CD8-positive, alpha-beta T cell (primary cell): ENCODE measurements at regions of chr12 and their contacts with region 1.

Region 1: DNA sequence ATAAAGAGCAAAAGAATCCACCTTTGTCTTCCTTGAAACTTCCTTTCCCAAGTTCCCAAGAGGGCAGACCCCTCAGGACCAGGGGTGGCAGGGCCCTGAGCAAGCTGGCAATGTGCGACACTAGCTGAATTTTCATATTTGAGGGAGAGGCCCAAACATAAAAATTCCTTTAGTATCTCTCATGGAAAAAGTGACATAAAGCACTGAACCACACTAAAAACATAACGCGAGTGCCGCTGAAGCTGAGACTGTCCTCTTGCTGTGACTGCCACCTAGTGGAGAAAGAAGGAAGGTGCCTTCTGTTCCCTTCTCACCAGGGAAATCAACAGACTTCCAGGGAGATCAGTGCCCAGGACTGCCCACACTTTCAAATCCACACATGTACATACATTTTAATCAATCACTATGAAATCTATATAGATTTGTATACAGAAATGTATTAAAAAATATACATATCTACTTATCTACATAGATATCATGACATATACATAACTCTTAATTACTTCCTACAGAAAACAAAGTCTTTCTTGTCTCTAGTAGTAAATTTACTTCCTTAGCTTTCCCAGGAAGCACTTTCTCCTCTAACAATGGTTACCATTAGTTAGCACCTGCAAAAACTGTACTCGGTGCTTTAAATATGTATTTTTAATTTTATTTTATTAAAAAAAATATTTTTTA is 53.8 kb downstream of the SSH1 start:
- DNase-seq: peak; percentile 44 to 84 (median 68)
- ATAC-seq: peak; percentile 95
- H3K4me3 ChIP-seq: no peak overlapping the region
- H3K4me3 Mint-ChIP-seq: no peak overlapping the region
- H3K27ac ChIP-seq: no peak overlapping the region
- H3K27ac Mint-ChIP-seq: peak overlapping the region; percentile 14
- H3K4me1 ChIP-seq: no peaks in the 10 kb centered on the region
- H3K4me1 Mint-ChIP-seq: peaks cover 4% of the 10 kb centered on the region
- H3K27me3 ChIP-seq: no peaks in the 10 kb centered on the region
- H3K27me3 Mint-ChIP-seq: no peaks in the 10 kb centered on the region
- CTCF ChIP-seq: peak; percentile 94

Region 2: DNA sequence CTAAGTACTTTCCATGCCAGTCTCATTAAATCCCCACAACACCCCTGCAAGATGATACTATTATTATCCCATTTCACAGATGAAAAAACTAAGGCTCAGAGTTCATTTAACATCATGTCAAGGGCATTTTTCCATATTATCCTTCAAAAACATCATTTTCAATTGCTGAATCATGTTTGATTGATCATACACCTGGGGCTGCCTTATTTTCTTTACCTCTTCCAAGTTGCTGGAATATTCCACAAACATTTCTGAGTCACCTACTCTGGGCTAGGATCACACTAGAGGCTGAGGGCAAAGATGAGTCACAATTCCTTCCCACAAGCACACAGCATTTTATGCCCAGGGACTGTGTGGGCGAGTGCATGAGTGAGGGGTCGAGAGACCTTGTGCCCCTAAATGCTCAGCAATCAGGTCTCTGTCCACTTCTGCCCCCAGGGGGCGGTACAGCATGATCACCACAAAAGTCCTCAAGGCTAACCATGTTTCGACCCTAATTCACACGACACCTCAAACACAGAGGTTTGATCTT is 191.6 kb before region 1 on chr12:
- CTCF ChIA-PET with region 1: interaction called, 43 read pairs
- POLR2A ChIA-PET with region 1: interaction called, 5 read pairs
- intact Hi-C with region 1: loop called (anchors 1 kb)
- DNase-seq: peak in 7 of 9 experiments; percentile 47 to 85 (median 68)
- ATAC-seq: peak; percentile 34
- H3K4me3 ChIP-seq: no peak overlapping the region
- H3K4me3 Mint-ChIP-seq: no peak overlapping the region
- H3K27ac ChIP-seq: no peak overlapping the region
- H3K27ac Mint-ChIP-seq: no peak overlapping the region
- H3K4me1 ChIP-seq: peaks cover 10% of the 10 kb centered on the region
- H3K4me1 Mint-ChIP-seq: peaks cover 22% of the 10 kb centered on the region
- H3K27me3 ChIP-seq: no peaks in the 10 kb centered on the region
- H3K27me3 Mint-ChIP-seq: no peaks in the 10 kb centered on the region
- CTCF ChIP-seq: peak; percentile 38

Region 3: DNA sequence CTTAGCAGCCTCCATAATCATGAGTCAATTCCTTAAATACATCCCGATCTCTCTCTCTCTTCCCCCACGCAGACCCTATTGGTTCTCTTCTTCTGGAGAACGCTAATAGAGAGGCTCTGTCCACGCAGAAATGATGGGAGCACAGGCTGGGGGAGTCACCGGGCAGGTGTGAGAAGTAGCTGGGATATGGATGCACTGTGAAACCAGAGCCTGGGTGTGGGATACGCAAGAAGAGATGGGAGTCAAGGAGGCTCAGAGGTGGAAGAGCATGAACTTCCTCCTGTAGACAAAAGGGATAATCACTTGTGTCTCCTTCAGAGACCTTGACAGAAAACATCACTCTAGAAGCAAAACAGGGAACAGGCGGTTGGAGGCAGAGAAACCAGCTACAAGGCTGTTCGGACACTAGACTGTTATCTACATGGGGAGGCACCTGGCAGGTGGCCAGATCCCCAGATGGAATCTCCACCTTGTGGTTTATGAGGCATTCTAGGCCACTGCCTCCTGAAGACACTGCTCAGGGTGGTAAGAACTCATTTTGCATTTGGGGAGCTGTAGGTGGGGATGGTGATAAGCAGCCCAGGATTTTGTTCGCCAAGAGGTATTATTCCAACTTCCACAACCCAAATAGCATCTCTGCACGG is 162.6 kb before region 1 on chr12:
- CTCF ChIA-PET with region 1: interaction called, 21 read pairs
- POLR2A ChIA-PET with region 1: no interaction called
- intact Hi-C with region 1: no loop called
- DNase-seq: peak in 1 of 9 experiments; percentile 30
- ATAC-seq: no peak
- H3K4me3 ChIP-seq: no peak overlapping the region
- H3K4me3 Mint-ChIP-seq: no peak overlapping the region
- H3K27ac ChIP-seq: no peak overlapping the region
- H3K27ac Mint-ChIP-seq: no peak overlapping the region
- H3K4me1 ChIP-seq: peaks cover 37% of the 10 kb centered on the region
- H3K4me1 Mint-ChIP-seq: peaks cover 48% of the 10 kb centered on the region
- H3K27me3 ChIP-seq: no peaks in the 10 kb centered on the region
- H3K27me3 Mint-ChIP-seq: no peaks in the 10 kb centered on the region
- CTCF ChIP-seq: no peak

Region 4: GRCh38 chr12:108816652-108817335 is 13.2 kb after region 1 on chr12:
- CTCF ChIA-PET with region 1: interaction called, 19 read pairs
- POLR2A ChIA-PET with region 1: no interaction called
- intact Hi-C with region 1: no loop called
- DNase-seq: no peak
- ATAC-seq: no peak
- H3K4me3 ChIP-seq: no peak overlapping the region
- H3K4me3 Mint-ChIP-seq: no peak overlapping the region
- H3K27ac ChIP-seq: no peak overlapping the region
- H3K27ac Mint-ChIP-seq: no peak overlapping the region
- H3K4me1 ChIP-seq: no peaks in the 10 kb centered on the region
- H3K4me1 Mint-ChIP-seq: no peaks in the 10 kb centered on the region
- H3K27me3 ChIP-seq: no peaks in the 10 kb centered on the region
- H3K27me3 Mint-ChIP-seq: no peaks in the 10 kb centered on the region
- CTCF ChIP-seq: no peak

Region 5: GRCh38 chr12:108875682-108876361 is 72.3 kb after region 1 on chr12:
- CTCF ChIA-PET with region 1: no interaction called
- POLR2A ChIA-PET with region 1: no interaction called
- intact Hi-C with region 1: no loop called
- DNase-seq: no peak
- ATAC-seq: no peak
- H3K4me3 ChIP-seq: no peak overlapping the region
- H3K4me3 Mint-ChIP-seq: no peak overlapping the region
- H3K27ac ChIP-seq: no peak overlapping the region
- H3K27ac Mint-ChIP-seq: no peak overlapping the region
- H3K4me1 ChIP-seq: no peaks in the 10 kb centered on the region
- H3K4me1 Mint-ChIP-seq: no peaks in the 10 kb centered on the region
- H3K27me3 ChIP-seq: no peaks in the 10 kb centered on the region
- H3K27me3 Mint-ChIP-seq: peaks cover 2% of the 10 kb centered on the region
- CTCF ChIP-seq: no peak

Region 6: GRCh38 chr12:108950991-108951739 is 147.6 kb after region 1 on chr12:
- CTCF ChIA-PET with region 1: interaction called, 4 read pairs
- POLR2A ChIA-PET with region 1: no interaction called
- intact Hi-C with region 1: loop called (anchors 5 kb)
- DNase-seq: peak; percentile 43 to 83 (median 69)
- ATAC-seq: peak; percentile 91
- H3K4me3 ChIP-seq: no peak overlapping the region
- H3K4me3 Mint-ChIP-seq: no peak overlapping the region
- H3K27ac ChIP-seq: no peak overlapping the region
- H3K27ac Mint-ChIP-seq: no peak overlapping the region
- H3K4me1 ChIP-seq: no peaks in the 10 kb centered on the region
- H3K4me1 Mint-ChIP-seq: peaks cover 6% of the 10 kb centered on the region
- H3K27me3 ChIP-seq: no peaks in the 10 kb centered on the region
- H3K27me3 Mint-ChIP-seq: peaks cover 16% of the 10 kb centered on the region
- CTCF ChIP-seq: peak; percentile 86